ENCODE measurements at regions of chr11 and their contacts with region 1.

Region 1: GRCh38 chr11:64742889-64743590 is 902 bp downstream of the RASGRP2 start:
- DNase-seq: peak; percentile 48 to 81 (median 75)
- H3K4me3 ChIP-seq: peak overlapping the region; percentile 44
- H3K27ac ChIP-seq: no peak overlapping the region
- H3K4me1 ChIP-seq: peaks cover 11% of the 10 kb centered on the region
- H3K27me3 ChIP-seq: no peaks in the 10 kb centered on the region
- CTCF ChIP-seq: peak; percentile 18 to 69 (median 44)
- EP300 ChIP-seq: no peak
- POLR2A ChIP-seq: no peak

Region 2: GRCh38 chr11:64396079-64396591 is 346.9 kb before region 1 on chr11:
- intact Hi-C with region 1: no loop called
- DNase-seq: no peak
- H3K4me3 ChIP-seq: no peak overlapping the region
- H3K27ac ChIP-seq: no peak overlapping the region
- H3K4me1 ChIP-seq: no peaks in the 10 kb centered on the region
- H3K27me3 ChIP-seq: no peaks in the 10 kb centered on the region
- CTCF ChIP-seq: no peak
- EP300 ChIP-seq: no peak
- POLR2A ChIP-seq: no peak

Region 3: GRCh38 chr11:64778508-64779346 is 35.7 kb after region 1 on chr11 and contains the start of gene SF1:
- intact Hi-C with region 1: loop called in 1 of 4 experiments (anchors 5 kb)
- DNase-seq: peak; percentile 98 to 99 (median 98)
- H3K4me3 ChIP-seq: peak within 1 kb of the TSS; percentile 74
- H3K27ac ChIP-seq: peak within 1 kb of the TSS; percentile 96 to 100
- H3K4me1 ChIP-seq: peaks cover 7% of the 10 kb centered on the region
- H3K27me3 ChIP-seq: no peaks in the 10 kb centered on the region
- CTCF ChIP-seq: peak in 1 of 3 donors; percentile 50
- EP300 ChIP-seq: peak; percentile 11
- POLR2A ChIP-seq: peak; percentile 97
- total RNA-seq, gene SF1: 231 to 380 (median 306) TPM